Right ventricle myocardium superior (tissue), 1 donor: ENCODE measurements at regions of chr16 and their contacts with region 1.

Region 1: DNA sequence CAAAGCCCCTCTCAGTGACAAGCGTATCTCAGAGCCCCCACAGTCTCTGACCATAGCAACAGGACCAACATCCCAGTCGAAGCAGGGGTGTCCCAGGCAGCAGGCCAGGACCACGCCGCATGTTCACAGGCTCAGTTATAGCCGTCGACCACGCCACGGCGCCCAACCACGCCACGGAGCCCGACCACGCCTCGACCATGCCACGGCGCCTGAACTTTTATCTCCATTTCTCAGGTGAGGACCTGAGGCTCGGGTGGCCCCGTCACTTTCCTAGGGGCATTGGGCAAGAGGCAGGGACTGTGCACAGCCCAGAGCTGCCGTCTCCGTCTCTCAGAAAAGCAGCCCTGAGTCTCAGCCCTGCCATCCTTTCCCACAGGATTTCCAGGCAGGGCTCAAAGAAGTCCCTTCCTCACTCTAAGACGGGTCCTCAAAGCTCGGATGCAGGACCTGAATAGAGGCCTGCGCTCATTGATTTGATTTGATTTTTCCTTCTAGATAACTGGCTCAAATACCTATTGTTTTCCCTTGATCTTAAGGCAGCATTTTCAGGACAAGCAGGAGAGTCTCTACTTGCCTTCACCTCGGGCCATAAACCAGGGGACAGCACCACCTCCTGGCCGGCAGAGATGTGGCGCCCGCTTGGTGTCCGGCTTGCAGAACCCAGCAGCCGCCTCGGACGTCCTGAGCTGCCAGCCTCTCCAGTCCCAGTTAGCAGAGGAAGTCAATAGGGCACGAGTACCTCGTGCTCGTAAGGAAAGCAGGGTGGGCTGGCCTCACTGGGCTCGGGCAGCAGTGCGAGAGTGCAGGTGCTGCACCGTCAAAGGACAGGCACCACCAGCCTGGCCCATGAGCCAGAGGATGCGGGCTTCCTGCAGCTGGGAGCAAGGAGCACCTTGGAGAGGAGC is 38.7 kb downstream of the C16orf95 start:
- DNase-seq: peak; percentile 82
- ATAC-seq: peak; percentile 97

Region 2: GRCh38 chr16:86563489-86564345 is 714.7 kb before region 1 on chr16:
- intact Hi-C with region 1: loop called (anchors 2 kb)
- DNase-seq: peak; percentile 92
- ATAC-seq: peak; percentile 81

Region 3: GRCh38 chr16:87067836-87068761 is 210.3 kb before region 1 on chr16:
- intact Hi-C with region 1: loop called (anchors 5 kb)
- DNase-seq: no peak
- ATAC-seq: no peak

Region 4: DNA sequence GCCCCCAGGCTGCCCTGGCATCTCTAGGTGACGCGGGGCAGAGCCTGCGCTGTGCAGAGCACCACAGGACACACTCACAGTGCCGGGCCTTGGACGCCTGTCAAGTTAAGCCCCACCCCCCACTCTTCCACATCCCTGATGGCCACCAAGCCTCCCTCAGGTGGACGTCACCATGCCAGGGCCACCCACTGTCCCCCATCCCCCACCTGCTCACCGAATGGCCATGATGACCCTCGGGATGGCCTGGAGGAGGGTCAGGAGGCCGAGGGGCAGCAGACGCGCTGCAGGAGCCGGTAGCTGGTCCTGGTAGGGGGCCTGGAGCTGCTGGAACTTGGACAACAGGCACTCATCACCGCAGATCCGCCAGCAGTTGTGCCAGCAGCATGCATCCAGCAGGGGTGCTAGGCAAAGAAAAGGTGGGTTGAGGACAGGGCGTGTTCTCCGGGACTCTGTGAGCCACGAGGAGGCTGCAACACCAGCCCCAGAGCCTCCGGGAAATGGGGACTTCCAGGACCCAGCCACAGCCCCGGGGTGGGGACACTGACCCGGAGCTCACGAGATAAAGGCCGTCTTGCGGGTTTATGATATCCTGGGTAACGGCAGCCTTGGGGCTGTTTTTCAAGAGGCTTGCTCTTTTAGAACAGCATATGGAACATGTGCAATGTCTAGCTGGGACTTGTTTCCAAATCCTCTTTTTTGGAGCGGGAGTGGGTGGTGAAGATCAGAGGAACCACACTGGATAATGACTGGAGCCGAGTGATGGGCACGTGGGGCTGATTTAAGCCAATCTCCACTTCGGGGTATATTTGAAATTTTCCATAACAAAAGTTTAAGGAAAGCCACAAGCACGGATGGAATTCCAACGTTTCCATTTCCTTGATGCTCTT is 27.3 kb after region 1 on chr16:
- intact Hi-C with region 1: no loop called
- DNase-seq: no peak
- ATAC-seq: no peak

Region 5: GRCh38 chr16:87608400-87608985 is 330.1 kb after region 1 on chr16:
- intact Hi-C with region 1: no loop called
- DNase-seq: peak; percentile 83
- ATAC-seq: peak; percentile 73